CD8-positive, alpha-beta T cell (primary cell): ENCODE measurements at regions of chr11 and their contacts with region 1.

Region 1: GRCh38 chr11:128157423-128158298 is 429.7 kb downstream of the ETS1 start:
- DNase-seq: peak; percentile 16 to 85 (median 61)
- ATAC-seq: peak; percentile 90
- H3K4me3 ChIP-seq: peak overlapping the region; percentile 35 to 38
- H3K4me3 Mint-ChIP-seq: peak overlapping the region; percentile 81
- H3K27ac ChIP-seq: no peak overlapping the region
- H3K27ac Mint-ChIP-seq: peak overlapping the region; percentile 77
- H3K4me1 ChIP-seq: no peaks in the 10 kb centered on the region
- H3K4me1 Mint-ChIP-seq: peaks cover 7% of the 10 kb centered on the region
- H3K27me3 ChIP-seq: no peaks in the 10 kb centered on the region
- H3K27me3 Mint-ChIP-seq: no peaks in the 10 kb centered on the region
- CTCF ChIP-seq: peak; percentile 98

Region 2: DNA sequence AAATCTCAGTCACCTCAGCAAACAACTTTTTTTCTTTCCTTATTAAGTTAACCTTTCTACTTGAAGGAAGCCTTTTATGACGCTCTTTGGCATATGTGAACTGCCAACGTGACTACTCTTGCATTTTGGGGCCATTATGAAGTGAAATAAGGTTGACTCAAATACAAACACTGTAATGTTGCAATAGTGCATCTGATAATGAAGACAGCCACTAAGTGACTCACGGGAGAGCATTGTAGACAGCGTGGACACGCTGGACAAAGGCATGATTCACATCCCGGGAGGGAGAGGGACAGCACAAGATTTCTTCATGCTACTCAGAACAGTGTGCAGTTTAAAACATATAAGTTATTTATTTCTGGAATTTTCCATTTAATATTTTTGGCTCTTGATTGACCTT is 131.1 kb before region 1 on chr11:
- CTCF ChIA-PET with region 1: interaction called, 96 read pairs
- POLR2A ChIA-PET with region 1: interaction called, 3 read pairs
- intact Hi-C with region 1: loop called (anchors 1 kb)
- DNase-seq: no peak
- ATAC-seq: no peak
- H3K4me3 ChIP-seq: no peak overlapping the region
- H3K4me3 Mint-ChIP-seq: no peak overlapping the region
- H3K27ac ChIP-seq: no peak overlapping the region
- H3K27ac Mint-ChIP-seq: no peak overlapping the region
- H3K4me1 ChIP-seq: no peaks in the 10 kb centered on the region
- H3K4me1 Mint-ChIP-seq: peaks cover 2% of the 10 kb centered on the region
- H3K27me3 ChIP-seq: no peaks in the 10 kb centered on the region
- H3K27me3 Mint-ChIP-seq: peaks cover 5% of the 10 kb centered on the region
- CTCF ChIP-seq: no peak

Region 3: DNA sequence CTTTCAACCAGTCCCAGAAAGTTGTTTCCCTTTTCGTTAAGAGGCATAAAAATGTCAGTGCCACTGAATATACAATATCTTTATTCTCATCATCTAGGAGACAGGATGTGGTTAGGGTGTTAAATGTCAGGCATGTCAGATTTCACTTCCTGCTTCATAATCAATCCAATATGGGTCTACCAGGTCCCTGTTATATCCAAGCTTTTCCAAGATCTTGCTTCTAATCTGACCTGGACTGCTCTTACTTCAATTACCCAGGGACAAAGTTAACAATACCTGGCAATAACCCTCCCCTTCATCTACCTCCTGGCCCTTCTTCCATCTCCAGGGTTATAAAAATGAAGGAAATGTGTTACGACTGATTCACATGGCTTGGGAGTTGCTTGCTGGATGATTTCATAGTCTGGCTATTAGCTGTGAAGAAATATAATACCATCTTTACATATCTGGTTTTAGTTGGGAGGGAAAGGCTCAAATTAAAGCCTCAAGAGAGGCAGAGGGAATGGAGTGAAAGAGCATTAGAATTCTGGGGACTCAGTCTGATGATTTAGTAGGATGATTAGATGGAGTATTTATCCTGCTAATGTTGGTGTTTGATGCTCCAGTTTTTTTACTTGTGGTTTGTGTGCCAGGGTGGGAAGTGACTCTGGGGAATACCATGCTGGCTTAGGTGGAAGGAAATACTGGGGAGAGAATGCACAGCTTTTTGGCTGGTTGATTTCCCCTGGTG is 104.6 kb before region 1 on chr11:
- CTCF ChIA-PET with region 1: interaction called, 20 read pairs
- POLR2A ChIA-PET with region 1: no interaction called
- intact Hi-C with region 1: no loop called
- DNase-seq: peak in 2 of 9 experiments; percentile 53 to 79
- ATAC-seq: peak; percentile 62
- H3K4me3 ChIP-seq: peak overlapping the region in 1 of 2 experiments; percentile 21
- H3K4me3 Mint-ChIP-seq: peak overlapping the region; percentile 67
- H3K27ac ChIP-seq: peak overlapping the region in 1 of 2 experiments; percentile 79
- H3K27ac Mint-ChIP-seq: peak overlapping the region; percentile 91
- H3K4me1 ChIP-seq: peaks cover 66% of the 10 kb centered on the region
- H3K4me1 Mint-ChIP-seq: peaks cover 82% of the 10 kb centered on the region
- H3K27me3 ChIP-seq: no peaks in the 10 kb centered on the region
- H3K27me3 Mint-ChIP-seq: no peaks in the 10 kb centered on the region
- CTCF ChIP-seq: no peak

Region 4: DNA sequence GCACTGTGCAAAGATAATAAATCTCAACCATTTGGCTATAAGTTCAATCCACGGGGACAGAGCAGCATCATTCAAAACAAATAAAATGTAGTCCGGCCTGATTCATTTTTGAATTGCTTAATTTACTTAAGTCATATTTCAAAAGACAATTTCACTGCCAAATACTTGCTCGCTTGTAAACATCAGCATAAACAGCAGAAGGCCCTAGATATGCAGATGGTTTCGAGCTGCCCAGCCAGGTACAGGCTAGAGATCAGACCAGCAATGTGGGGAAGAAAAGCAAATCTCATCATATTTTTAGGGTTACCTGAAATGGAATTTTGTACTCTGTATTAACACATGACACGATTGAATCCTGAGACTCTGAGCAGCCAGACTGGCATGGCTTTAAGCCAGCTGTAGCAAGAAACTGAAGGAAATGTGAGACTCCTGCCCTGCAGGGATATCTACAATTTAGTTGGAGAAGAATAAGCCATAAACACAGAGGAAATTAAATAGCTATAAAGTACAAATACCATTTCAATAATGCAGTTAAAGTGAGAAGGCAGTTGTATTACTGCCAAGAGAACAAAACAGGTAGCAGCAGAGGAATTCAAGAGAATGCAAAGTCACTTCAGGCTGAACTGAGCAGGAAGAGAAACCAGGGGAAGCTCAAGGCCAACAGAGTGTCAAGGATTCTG is 10.6 kb before region 1 on chr11:
- CTCF ChIA-PET with region 1: interaction called, 41 read pairs
- POLR2A ChIA-PET with region 1: no interaction called
- intact Hi-C with region 1: no loop called
- DNase-seq: no peak
- ATAC-seq: no peak
- H3K4me3 ChIP-seq: no peak overlapping the region
- H3K4me3 Mint-ChIP-seq: no peak overlapping the region
- H3K27ac ChIP-seq: no peak overlapping the region
- H3K27ac Mint-ChIP-seq: no peak overlapping the region
- H3K4me1 ChIP-seq: no peaks in the 10 kb centered on the region
- H3K4me1 Mint-ChIP-seq: no peaks in the 10 kb centered on the region
- H3K27me3 ChIP-seq: no peaks in the 10 kb centered on the region
- H3K27me3 Mint-ChIP-seq: no peaks in the 10 kb centered on the region
- CTCF ChIP-seq: no peak

Region 5: GRCh38 chr11:128757235-128757711 is 599.6 kb after region 1 on chr11:
- CTCF ChIA-PET with region 1: interaction called, 13 read pairs
- POLR2A ChIA-PET with region 1: no interaction called
- intact Hi-C with region 1: no loop called
- DNase-seq: peak; percentile 48 to 90 (median 71)
- ATAC-seq: peak; percentile 99
- H3K4me3 ChIP-seq: no peak overlapping the region
- H3K4me3 Mint-ChIP-seq: peak overlapping the region; percentile 35
- H3K27ac ChIP-seq: peak overlapping the region in 1 of 2 experiments; percentile 30
- H3K27ac Mint-ChIP-seq: peak overlapping the region; percentile 88
- H3K4me1 ChIP-seq: peaks cover 67% of the 10 kb centered on the region
- H3K4me1 Mint-ChIP-seq: peaks cover 89% of the 10 kb centered on the region
- H3K27me3 ChIP-seq: no peaks in the 10 kb centered on the region
- H3K27me3 Mint-ChIP-seq: no peaks in the 10 kb centered on the region
- CTCF ChIP-seq: peak; percentile 76

Region 6: GRCh38 chr11:128831174-128832120 is 673.8 kb after region 1 on chr11:
- CTCF ChIA-PET with region 1: interaction called, 64 read pairs
- POLR2A ChIA-PET with region 1: no interaction called
- intact Hi-C with region 1: loop called (anchors 1 to 5 kb)
- DNase-seq: peak; percentile 75 to 93 (median 88)
- ATAC-seq: peak; percentile 81
- H3K4me3 ChIP-seq: peak overlapping the region; percentile 11 to 26
- H3K4me3 Mint-ChIP-seq: peak overlapping the region; percentile 55
- H3K27ac ChIP-seq: peak overlapping the region; percentile 31 to 84
- H3K27ac Mint-ChIP-seq: peak overlapping the region; percentile 80
- H3K4me1 ChIP-seq: peaks cover 9% of the 10 kb centered on the region
- H3K4me1 Mint-ChIP-seq: peaks cover 18% of the 10 kb centered on the region
- H3K27me3 ChIP-seq: no peaks in the 10 kb centered on the region
- H3K27me3 Mint-ChIP-seq: no peaks in the 10 kb centered on the region
- CTCF ChIP-seq: peak; percentile 87

Region 7: DNA sequence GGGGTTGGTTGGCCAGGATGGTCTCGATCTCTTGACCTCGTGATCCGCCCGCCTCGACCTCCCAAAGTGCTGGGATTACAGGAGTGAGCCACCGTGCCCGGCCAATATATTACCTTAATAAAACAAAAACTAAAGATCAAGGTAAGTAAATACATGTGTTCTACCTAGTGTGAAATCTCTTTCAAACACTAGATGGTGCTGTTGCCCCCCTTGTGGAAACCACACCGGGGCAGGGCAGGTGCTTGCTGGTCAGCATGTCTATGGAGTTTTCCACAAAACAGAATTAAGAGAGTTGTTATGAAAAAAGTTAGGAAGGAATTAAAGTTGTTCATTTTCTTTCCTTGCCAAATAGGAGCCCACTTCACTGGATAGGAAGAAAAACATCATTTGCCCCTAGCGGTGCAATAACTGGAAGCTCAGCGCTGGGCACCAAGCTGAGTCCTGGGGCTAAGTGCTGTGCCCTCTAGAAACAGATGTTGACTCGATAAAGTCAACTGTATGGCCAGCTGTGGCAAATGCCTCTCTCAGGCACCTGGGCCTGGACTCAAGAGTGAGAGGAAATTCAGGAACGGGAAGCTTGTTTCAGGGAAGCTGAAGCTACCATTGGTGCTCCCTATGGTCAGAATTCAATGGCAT is 727.2 kb after region 1 on chr11:
- CTCF ChIA-PET with region 1: interaction called, 12 read pairs
- POLR2A ChIA-PET with region 1: no interaction called
- intact Hi-C with region 1: no loop called
- DNase-seq: peak in 7 of 9 experiments; percentile 35 to 78 (median 57)
- ATAC-seq: peak; percentile 55
- H3K4me3 ChIP-seq: no peak overlapping the region
- H3K4me3 Mint-ChIP-seq: no peak overlapping the region
- H3K27ac ChIP-seq: no peak overlapping the region
- H3K27ac Mint-ChIP-seq: no peak overlapping the region
- H3K4me1 ChIP-seq: no peaks in the 10 kb centered on the region
- H3K4me1 Mint-ChIP-seq: peaks cover 1% of the 10 kb centered on the region
- H3K27me3 ChIP-seq: peaks cover 6 to 10% of the 10 kb centered on the region in 2 experiments
- H3K27me3 Mint-ChIP-seq: peaks cover 67% of the 10 kb centered on the region
- CTCF ChIP-seq: peak; percentile 93